ENCODE measurements at regions of chr22 and their contacts with region 1.

Region 1: GRCh38 chr22:19970479-19971275 is 29.1 kb upstream of the TXNRD2 start:
- DNase-seq: no peak
- ATAC-seq: peak; percentile 68
- H3K4me3 ChIP-seq: no peak overlapping the region
- H3K27ac ChIP-seq: no peak overlapping the region; the same call in 1 of the 2 replicates
- H3K4me1 ChIP-seq: peaks cover 10 to 25% of the 10 kb centered on the region in 2 experiments
- H3K27me3 ChIP-seq: no peaks in the 10 kb centered on the region
- CTCF ChIP-seq: peak; percentile 56 to 96 (median 94); a peak in 5 of 6 replicates
- POLR2A ChIP-seq: no peak
- RAD21 ChIP-seq: peak; percentile 89

Region 2: GRCh38 chr22:19495562-19496323 is 474.9 kb before region 1 on chr22:
- CTCF ChIA-PET with region 1: no interaction called
- POLR2A ChIA-PET with region 1: no interaction called
- RAD21 ChIA-PET with region 1: no interaction called
- intact Hi-C with region 1: no loop called
- DNase-seq: no peak
- ATAC-seq: 0 out of 2 replicates have a peak, but pooled peaks have one; percentile 47
- H3K4me3 ChIP-seq: no peak overlapping the region
- H3K27ac ChIP-seq: no peak overlapping the region
- H3K4me1 ChIP-seq: no peaks in the 10 kb centered on the region
- H3K27me3 ChIP-seq: no peaks in the 10 kb centered on the region
- CTCF ChIP-seq: no peak; a peak in 2 of 6 replicates
- POLR2A ChIP-seq: no peak
- RAD21 ChIP-seq: peak; percentile 27

Region 3: DNA sequence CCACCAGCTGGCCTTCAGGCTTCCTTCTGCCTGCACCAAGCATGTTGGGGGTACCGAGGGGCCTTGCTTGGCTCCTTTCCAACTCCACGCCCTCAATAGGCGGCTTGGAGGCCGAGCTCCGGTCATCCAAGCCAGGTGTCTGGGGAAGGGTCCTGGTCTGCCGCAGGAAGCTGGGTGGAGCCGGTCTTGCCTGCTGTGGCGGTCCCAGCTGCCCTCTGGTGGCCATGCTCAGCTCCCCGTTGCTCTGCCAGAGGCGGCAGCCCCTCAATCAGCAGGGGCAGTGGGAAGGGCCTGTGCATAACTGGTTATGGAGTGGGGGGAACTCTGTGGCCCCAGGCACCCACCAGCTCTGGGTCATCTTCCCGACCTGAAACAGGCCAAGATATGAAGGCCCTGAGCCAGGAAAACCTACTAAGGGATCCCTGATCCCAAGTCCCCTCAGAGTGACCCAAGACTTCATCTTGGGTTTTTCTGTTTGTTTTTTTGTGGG is 42.8 kb after region 1 on chr22:
- CTCF ChIA-PET with region 1: interaction called, 7 read pairs
- POLR2A ChIA-PET with region 1: no interaction called
- RAD21 ChIA-PET with region 1: no interaction called
- intact Hi-C with region 1: loop called (anchors 5 kb)
- DNase-seq: no peak
- ATAC-seq: no peak
- H3K4me3 ChIP-seq: no peak overlapping the region
- H3K27ac ChIP-seq: no peak overlapping the region
- H3K4me1 ChIP-seq: peaks cover 17 to 28% of the 10 kb centered on the region in 2 experiments; a peak in 3 of 4 replicates
- H3K27me3 ChIP-seq: no peaks in the 10 kb centered on the region
- CTCF ChIP-seq: peak; percentile 56 to 69 (median 57); a peak in 5 of 6 replicates
- POLR2A ChIP-seq: no peak
- RAD21 ChIP-seq: peak; percentile 66

Region 4: DNA sequence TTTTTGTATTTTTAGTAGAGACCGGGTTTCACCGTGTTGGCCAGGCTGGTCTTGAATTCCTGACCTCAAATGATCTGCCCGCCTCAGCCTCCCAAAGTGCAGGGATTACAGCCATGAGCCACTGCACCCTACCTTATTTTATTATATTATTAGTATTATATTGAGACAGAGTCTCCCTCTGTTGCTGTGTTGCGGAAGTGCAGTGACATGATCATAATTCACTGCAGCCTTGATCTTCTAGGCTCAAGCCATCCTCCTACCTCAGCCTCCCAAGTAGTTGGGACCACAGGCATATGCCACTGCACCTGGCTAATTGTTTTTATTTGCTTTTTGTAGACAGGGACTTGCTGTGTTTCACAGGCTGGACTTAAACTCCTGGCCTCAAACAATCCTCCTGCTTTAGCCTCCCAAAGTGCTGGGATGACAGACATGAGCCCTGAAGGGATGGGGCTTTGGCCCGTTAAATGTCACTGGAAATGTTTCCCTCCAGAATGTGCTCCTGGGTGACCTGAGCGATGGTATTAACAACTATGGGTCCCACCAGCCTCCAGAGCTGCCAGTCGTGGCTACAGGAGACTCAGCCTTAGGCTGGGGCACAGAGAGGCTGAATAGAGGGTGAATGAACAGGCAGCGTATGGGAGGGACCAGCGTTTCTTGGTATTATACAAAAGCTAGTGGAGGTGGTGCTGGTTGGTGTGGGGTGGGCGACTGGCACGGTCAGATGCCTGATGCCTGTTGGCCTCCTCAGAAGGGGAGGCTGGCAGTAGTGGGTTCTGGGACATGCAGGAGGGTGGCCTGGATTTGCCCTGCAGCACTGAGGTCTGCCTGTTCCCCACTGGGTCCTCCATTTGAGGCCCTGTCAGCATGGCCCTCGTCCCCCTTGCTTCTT is 57.5 kb after region 1 on chr22:
- CTCF ChIA-PET with region 1: no interaction called
- POLR2A ChIA-PET with region 1: no interaction called
- RAD21 ChIA-PET with region 1: no interaction called
- intact Hi-C with region 1: loop called (anchors 1 kb)
- DNase-seq: no peak
- ATAC-seq: peak; percentile 73
- H3K4me3 ChIP-seq: no peak overlapping the region
- H3K27ac ChIP-seq: no peak overlapping the region
- H3K4me1 ChIP-seq: peaks cover 2 to 14% of the 10 kb centered on the region in 2 experiments; a peak in 3 of 4 replicates
- H3K27me3 ChIP-seq: no peaks in the 10 kb centered on the region
- CTCF ChIP-seq: peak; percentile 19 to 56 (median 51); a peak in 4 of 6 replicates
- POLR2A ChIP-seq: no peak
- RAD21 ChIP-seq: peak; percentile 59

Region 5: DNA sequence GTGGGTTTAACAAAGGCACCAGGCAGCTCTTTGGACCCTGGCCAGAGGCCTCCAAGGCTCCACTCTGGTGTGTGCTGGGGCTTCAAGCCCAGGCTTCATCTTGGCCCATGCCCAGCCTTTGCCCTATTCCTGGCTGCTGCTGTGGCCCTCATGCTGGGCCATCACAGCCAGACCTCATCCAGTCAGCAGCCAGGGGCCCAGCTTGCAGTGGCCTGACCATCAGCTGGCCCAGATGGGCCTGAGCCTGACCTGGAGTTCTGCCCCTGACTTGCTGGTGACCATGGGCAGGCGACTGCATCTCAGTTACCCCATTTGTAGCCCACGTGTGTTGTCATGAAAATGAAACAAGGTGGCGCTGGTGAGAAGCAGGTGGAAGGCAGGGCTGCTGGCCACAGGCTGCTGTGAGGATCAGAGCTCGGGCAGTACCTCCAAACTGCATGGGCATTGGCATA is 612.8 kb after region 1 on chr22:
- CTCF ChIA-PET with region 1: no interaction called
- POLR2A ChIA-PET with region 1: no interaction called
- RAD21 ChIA-PET with region 1: no interaction called
- intact Hi-C with region 1: no loop called
- DNase-seq: no peak
- ATAC-seq: peak; percentile 65
- H3K4me3 ChIP-seq: no peak overlapping the region
- H3K27ac ChIP-seq: no peak overlapping the region
- H3K4me1 ChIP-seq: no peaks in the 10 kb centered on the region
- H3K27me3 ChIP-seq: no peaks in the 10 kb centered on the region
- CTCF ChIP-seq: peak in 2 of 3 experiments; percentile 30 to 49; a peak in 3 of 6 replicates
- POLR2A ChIP-seq: no peak
- RAD21 ChIP-seq: 0 out of 2 replicates have a peak, but pooled peaks have one; percentile 17